Activated T-helper 1 cell treated with anti-CD3 and anti-CD28 coated beads, Interleukin-12 subunit alpha, Interleukin-12 subunit beta, Interleukin-2, Interleukin-4 antibody, amounts not matched to agents 30 ng/mL and 10 ng/mL and 1 ng/mL, durations not matched to agents 14 hours and 24 hours and 36 hours (primary cell): ENCODE measurements at regions of chr18 and their contacts with region 1.

Region 1: GRCh38 chr18:35343936-35344735 is at the start of gene ZNF24:
- DNase-seq: peak; percentile 90
- H3K4me3 Mint-ChIP-seq: peak within 1 kb of the TSS; percentile 99
- H3K27ac Mint-ChIP-seq: peak within 1 kb of the TSS; percentile 98
- H3K4me1 Mint-ChIP-seq: peaks cover 38% of the 10 kb centered on the region
- H3K27me3 Mint-ChIP-seq: no peaks in the 10 kb centered on the region
- total RNA-seq, gene ZNF24: 56.4 and 56.6 TPM in 2 replicates

Region 2: GRCh38 chr18:34857320-34857719 is 486.8 kb before region 1 on chr18:
- intact Hi-C with region 1: loop called (anchors 1 kb)
- DNase-seq: no peak
- H3K4me3 Mint-ChIP-seq: no peak overlapping the region
- H3K27ac Mint-ChIP-seq: no peak overlapping the region
- H3K4me1 Mint-ChIP-seq: peaks cover 7% of the 10 kb centered on the region
- H3K27me3 Mint-ChIP-seq: peaks cover 43% of the 10 kb centered on the region

Region 3: GRCh38 chr18:35158728-35159450 is 185.2 kb before region 1 on chr18:
- intact Hi-C with region 1: loop called (anchors 5 kb)
- DNase-seq: peak; percentile 17
- H3K4me3 Mint-ChIP-seq: no peak overlapping the region
- H3K27ac Mint-ChIP-seq: peak overlapping the region; percentile 89
- H3K4me1 Mint-ChIP-seq: peaks cover 29% of the 10 kb centered on the region
- H3K27me3 Mint-ChIP-seq: no peaks in the 10 kb centered on the region

Region 4: DNA sequence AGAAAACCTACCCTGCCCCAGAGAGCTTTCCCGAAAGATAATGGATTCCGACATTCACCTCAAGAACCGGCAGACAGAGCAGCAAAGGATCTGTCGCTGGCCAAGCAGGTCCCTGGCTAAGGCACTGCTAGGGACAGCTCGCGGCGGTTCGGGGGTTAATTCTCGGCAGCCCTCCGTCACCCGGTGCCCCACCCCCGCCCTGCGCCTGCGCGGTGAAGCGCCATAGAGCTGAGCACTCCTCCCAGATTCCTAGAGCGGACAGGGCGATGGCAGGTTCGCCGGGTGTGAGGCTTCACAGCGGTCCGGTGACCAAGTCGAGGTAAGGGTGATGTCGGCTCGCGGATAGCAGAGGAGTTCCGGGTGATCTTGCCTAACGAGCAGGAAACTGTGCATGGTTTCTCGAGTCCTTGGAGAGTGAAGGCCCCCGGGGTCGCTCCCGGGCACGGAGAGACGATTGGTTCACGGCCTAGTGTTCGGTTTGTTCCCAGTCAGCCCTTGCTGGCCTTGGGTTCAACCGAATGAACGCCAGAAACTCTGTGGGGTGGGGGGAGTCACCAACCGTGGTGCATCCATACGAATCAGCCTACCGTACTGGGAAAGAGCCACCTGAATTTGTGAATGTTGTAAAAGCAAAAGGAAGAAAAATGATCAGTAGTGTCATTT is 53.9 kb before region 1 on chr18 and contains the start of gene ZSCAN30:
- intact Hi-C with region 1: loop called (anchors 1 kb)
- DNase-seq: peak; percentile 94
- H3K4me3 Mint-ChIP-seq: peak within 1 kb of the TSS; percentile 100
- H3K27ac Mint-ChIP-seq: peak within 1 kb of the TSS; percentile 99
- H3K4me1 Mint-ChIP-seq: peaks cover 49% of the 10 kb centered on the region
- H3K27me3 Mint-ChIP-seq: no peaks in the 10 kb centered on the region
- total RNA-seq, gene ZSCAN30: 10.2 and 11.0 TPM in 2 replicates

Region 5: GRCh38 chr18:35376742-35377695 is 32.9 kb after region 1 on chr18 and contains the start of gene ZNF396:
- intact Hi-C with region 1: loop called (anchors 1 kb)
- DNase-seq: peak; percentile 70
- H3K4me3 Mint-ChIP-seq: peak within 1 kb of the TSS; percentile 82
- H3K27ac Mint-ChIP-seq: peak within 1 kb of the TSS; percentile 41
- H3K4me1 Mint-ChIP-seq: peaks cover 5% of the 10 kb centered on the region
- H3K27me3 Mint-ChIP-seq: peaks cover 20% of the 10 kb centered on the region
- total RNA-seq, gene ZNF396: 0.56 and 0.60 TPM in 2 replicates

Region 6: DNA sequence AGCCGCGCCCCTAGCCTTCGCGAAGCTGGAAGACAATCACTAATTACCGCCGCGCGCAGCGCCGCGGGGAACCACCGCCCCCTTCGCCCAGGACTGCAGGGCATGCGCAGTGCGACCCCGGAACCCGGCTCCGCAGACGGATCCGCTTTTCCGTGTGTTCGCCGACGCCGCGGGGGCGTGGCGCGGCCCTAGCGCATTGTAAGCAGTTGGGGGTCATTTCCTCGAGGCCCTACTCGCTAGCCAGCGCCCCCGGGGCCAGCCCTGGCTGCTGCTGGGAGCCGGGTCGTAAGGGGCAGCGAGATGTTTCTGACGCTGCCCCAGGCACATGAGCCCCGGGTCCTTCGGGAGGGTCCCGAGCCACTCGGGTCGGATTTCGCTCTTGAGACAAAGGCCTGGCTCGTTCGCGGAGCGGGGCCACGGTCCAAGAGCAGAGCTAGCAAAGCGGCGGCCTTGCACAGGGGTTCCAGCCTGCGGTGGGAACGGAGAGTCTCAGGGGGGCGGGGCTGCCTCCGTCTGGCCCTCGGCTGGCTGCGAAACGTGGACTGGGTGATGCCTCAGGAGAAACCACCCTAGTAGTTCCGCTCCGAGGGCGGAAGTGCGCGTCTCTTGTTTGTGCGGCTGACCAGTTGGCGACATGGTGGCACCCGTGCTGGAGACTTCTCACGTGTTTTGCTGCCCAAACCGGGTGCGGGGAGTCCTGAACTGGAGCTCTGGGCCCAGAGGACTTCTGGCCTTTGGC is 785.3 kb after region 1 on chr18 and contains the starts of genes ELP2 and SLC39A6:
- intact Hi-C with region 1: loop called (anchors 1 kb)
- DNase-seq: peak; percentile 93
- H3K4me3 Mint-ChIP-seq: peak within 1 kb of the TSS; percentile 89
- H3K27ac Mint-ChIP-seq: peak within 1 kb of the TSS; percentile 91
- H3K4me1 Mint-ChIP-seq: peaks cover 53% of the 10 kb centered on the region
- H3K27me3 Mint-ChIP-seq: no peaks in the 10 kb centered on the region
- total RNA-seq, gene ELP2: 97.1 and 104 TPM in 2 replicates
- total RNA-seq, gene SLC39A6: 53.5 and 54.4 TPM in 2 replicates